Caco-2 (cell line): ENCODE measurements at regions of chr4 and their contacts with region 1.

Region 1: DNA sequence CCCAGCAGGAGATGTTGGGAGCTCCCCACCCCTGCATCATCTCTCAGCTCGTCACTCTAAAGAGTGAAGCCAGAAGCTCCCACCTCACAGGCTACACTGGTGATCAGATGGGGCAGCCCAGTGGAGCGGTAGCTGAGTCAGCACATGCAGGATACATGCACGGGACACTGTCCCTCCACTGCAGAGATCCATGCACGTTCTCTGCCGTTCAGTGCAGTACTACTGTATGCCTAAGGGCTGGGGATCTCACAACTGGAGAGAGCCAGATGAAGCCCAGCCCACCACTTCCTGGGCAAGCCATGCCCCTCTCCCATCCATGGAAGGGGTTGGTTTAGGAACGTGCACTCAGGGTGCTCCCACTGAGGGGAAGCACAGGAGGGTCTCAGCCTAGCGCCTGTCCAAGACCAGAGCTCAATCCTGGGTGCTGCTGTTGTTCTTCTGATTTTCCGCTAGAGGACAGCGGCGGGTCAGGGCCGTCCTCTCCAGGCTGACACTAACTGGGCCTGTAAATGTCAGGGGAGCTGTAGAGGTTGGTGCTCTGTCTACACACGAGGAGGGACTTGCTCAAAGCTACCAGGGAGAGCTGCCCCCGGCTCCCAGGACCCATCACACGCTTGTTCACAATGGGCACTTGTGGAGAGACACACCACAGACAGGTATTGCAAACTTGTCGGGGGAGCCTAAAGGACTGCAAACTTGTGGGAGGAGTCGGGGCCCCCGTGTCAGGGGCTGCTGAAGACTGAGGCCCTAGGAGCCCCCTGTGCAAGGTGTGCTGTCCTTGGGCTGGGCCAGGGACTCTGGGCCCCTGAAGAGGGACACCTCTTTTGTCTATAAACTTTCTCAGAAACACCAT is 18.2 kb upstream of the ABLIM2 start:
- DNase-seq: peak; percentile 69 to 71
- H3K4me3 ChIP-seq: no peak overlapping the region
- H3K4me3 Mint-ChIP-seq: no peak overlapping the region
- H3K27ac Mint-ChIP-seq: no peak overlapping the region
- H3K4me1 ChIP-seq: peaks cover 17% of the 10 kb centered on the region
- H3K4me1 Mint-ChIP-seq: peaks cover 9% of the 10 kb centered on the region
- H3K27me3 ChIP-seq: no peaks in the 10 kb centered on the region
- H3K27me3 Mint-ChIP-seq: no peaks in the 10 kb centered on the region
- CTCF ChIP-seq: peak; percentile 74 to 95

Region 2: GRCh38 chr4:8158710-8159536 is 17.9 kb before region 1 on chr4 and contains the start of gene ABLIM2:
- CTCF ChIA-PET with region 1: interaction called, 17 read pairs
- POLR2A ChIA-PET with region 1: no interaction called
- intact Hi-C with region 1: no loop called
- DNase-seq: peak; percentile 97 to 98
- H3K4me3 ChIP-seq: peak within 1 kb of the TSS; percentile 79
- H3K4me3 Mint-ChIP-seq: peak within 1 kb of the TSS; percentile 98
- H3K27ac Mint-ChIP-seq: peak within 1 kb of the TSS; percentile 76
- H3K4me1 ChIP-seq: peaks cover 7% of the 10 kb centered on the region; the same call in 1 of the 2 replicates
- H3K4me1 Mint-ChIP-seq: no peaks in the 10 kb centered on the region
- H3K27me3 ChIP-seq: no peaks in the 10 kb centered on the region
- H3K27me3 Mint-ChIP-seq: peaks cover 7% of the 10 kb centered on the region
- CTCF ChIP-seq: no peak
- total RNA-seq, gene ABLIM2: 0.23 TPM in 1 of 2 replicates, not detected in the other

Region 3: DNA sequence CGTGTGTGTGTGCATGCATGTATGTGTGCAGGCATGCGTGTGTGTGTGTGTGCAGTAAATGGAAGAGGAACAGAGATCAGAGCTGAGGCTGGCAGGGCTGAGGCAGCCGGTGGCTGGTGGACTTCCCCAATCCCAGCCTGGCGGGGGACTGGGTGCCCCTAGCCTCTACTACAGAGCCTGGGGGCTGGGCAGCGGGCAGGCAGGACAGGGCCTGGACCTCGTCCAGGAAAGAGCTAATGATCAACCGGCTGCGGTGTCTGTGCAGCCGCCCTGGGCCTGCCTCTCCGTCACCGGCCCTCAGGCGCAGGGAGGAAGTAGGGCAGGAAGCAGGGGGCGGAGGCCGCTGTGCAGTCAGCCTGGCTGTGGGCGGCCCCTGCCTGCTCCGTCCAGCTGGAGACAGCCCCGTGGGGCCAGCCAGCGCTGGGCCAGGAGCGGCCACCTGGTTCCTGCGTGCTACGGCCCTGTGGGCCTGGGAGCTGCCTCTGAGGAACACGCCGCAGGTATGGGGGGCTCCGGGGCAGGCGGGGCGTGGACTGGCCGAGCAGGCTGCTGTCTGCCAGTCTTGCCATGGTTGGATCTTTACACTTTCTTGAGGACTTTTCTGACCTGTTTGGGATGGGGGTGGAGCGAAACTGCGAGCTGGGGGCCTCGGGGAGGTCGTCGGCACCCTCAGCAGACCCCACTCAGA is 22.3 kb after region 1 on chr4 and contains the start of gene SH3TC1:
- CTCF ChIA-PET with region 1: interaction called, 22 read pairs
- POLR2A ChIA-PET with region 1: interaction called, 3 read pairs
- intact Hi-C with region 1: no loop called
- DNase-seq: peak; percentile 86 to 88
- H3K4me3 ChIP-seq: peak within 1 kb of the TSS; percentile 44
- H3K4me3 Mint-ChIP-seq: peak within 1 kb of the TSS; percentile 81
- H3K27ac Mint-ChIP-seq: peak within 1 kb of the TSS; percentile 89
- H3K4me1 ChIP-seq: peaks cover 48% of the 10 kb centered on the region
- H3K4me1 Mint-ChIP-seq: peaks cover 17% of the 10 kb centered on the region
- H3K27me3 ChIP-seq: no peaks in the 10 kb centered on the region
- H3K27me3 Mint-ChIP-seq: no peaks in the 10 kb centered on the region
- CTCF ChIP-seq: no peak
- total RNA-seq, gene SH3TC1: 17.2 and 18.6 TPM in 2 replicates

Region 4: DNA sequence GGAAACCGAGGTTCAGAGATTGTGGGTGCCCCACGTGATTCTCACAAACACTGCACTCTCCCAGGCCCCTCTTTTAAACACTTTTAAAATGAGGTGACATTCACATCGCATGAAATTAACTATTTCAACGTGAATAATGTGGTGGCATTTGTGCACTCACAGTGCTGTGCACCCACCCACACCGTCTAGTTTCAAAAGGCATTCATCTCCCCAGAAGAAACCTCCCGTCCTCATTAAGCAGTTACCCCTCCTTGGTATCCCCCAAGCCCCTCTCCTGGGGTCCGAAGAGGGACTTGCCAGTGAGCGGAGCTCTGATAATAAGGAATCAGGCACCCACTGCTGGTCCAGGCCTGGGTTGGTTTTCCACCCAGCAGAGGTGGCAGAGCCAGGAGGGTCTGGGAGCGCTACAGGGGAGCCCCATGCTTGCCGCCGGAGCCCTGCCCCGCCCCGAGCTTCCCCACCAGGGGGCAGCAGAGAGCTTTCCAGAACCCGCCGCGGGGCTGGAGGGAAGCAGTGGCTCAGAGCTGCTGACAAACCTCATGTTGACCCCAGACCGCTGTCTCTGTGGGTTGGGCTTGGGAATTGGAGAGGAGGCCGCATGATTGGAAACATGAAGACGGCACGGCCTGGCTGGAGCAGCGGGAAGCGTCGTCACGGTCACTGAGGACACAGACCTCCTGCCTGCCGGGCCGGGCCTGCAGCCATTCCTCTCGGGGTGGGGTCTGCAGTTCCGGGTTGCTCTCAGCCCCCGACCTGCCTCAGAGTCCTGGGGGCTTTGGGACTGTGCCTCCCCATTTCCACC is 65.3 kb after region 1 on chr4:
- CTCF ChIA-PET with region 1: interaction called, 30 read pairs
- POLR2A ChIA-PET with region 1: no interaction called
- intact Hi-C with region 1: loop called (anchors 1 kb)
- DNase-seq: peak; percentile 82 to 90
- H3K4me3 ChIP-seq: no peak overlapping the region
- H3K4me3 Mint-ChIP-seq: no peak overlapping the region
- H3K27ac Mint-ChIP-seq: no peak overlapping the region
- H3K4me1 ChIP-seq: peaks cover 33% of the 10 kb centered on the region
- H3K4me1 Mint-ChIP-seq: peaks cover 6% of the 10 kb centered on the region
- H3K27me3 ChIP-seq: no peaks in the 10 kb centered on the region
- H3K27me3 Mint-ChIP-seq: no peaks in the 10 kb centered on the region
- CTCF ChIP-seq: peak; percentile 83 to 92

Region 5: GRCh38 chr4:8410641-8411271 is 234.0 kb after region 1 on chr4:
- CTCF ChIA-PET with region 1: interaction called, 10 read pairs
- POLR2A ChIA-PET with region 1: no interaction called
- intact Hi-C with region 1: no loop called
- DNase-seq: peak; percentile 89 to 91
- H3K4me3 ChIP-seq: no peak overlapping the region
- H3K4me3 Mint-ChIP-seq: no peak overlapping the region
- H3K27ac Mint-ChIP-seq: no peak overlapping the region
- H3K4me1 ChIP-seq: no peaks in the 10 kb centered on the region
- H3K4me1 Mint-ChIP-seq: no peaks in the 10 kb centered on the region
- H3K27me3 ChIP-seq: no peaks in the 10 kb centered on the region
- H3K27me3 Mint-ChIP-seq: no peaks in the 10 kb centered on the region
- CTCF ChIP-seq: peak; percentile 36 to 41